ENCODE measurements at regions of chr16 and their contacts with region 1.

Region 1: GRCh38 chr16:15843635-15844279 is 13.1 kb downstream of the MYH11 start:
- DNase-seq: no peak
- ATAC-seq: no peak
- H3K4me3 ChIP-seq: no peak overlapping the region
- H3K27ac ChIP-seq: no peak overlapping the region
- H3K4me1 ChIP-seq: no peaks in the 10 kb centered on the region
- H3K27me3 ChIP-seq: no peaks in the 10 kb centered on the region
- CTCF ChIP-seq: no peak

Region 2: GRCh38 chr16:15928261-15929104 is 84.7 kb after region 1 on chr16:
- intact Hi-C with region 1: loop called in 1 of 2 experiments (anchors 10 kb)
- DNase-seq: no peak
- ATAC-seq: peak in 1 of 4 donors; percentile 21
- H3K4me3 ChIP-seq: no peak overlapping the region
- H3K27ac ChIP-seq: no peak overlapping the region
- H3K4me1 ChIP-seq: no peaks in the 10 kb centered on the region
- H3K27me3 ChIP-seq: no peaks in the 10 kb centered on the region
- CTCF ChIP-seq: no peak

Region 3: DNA sequence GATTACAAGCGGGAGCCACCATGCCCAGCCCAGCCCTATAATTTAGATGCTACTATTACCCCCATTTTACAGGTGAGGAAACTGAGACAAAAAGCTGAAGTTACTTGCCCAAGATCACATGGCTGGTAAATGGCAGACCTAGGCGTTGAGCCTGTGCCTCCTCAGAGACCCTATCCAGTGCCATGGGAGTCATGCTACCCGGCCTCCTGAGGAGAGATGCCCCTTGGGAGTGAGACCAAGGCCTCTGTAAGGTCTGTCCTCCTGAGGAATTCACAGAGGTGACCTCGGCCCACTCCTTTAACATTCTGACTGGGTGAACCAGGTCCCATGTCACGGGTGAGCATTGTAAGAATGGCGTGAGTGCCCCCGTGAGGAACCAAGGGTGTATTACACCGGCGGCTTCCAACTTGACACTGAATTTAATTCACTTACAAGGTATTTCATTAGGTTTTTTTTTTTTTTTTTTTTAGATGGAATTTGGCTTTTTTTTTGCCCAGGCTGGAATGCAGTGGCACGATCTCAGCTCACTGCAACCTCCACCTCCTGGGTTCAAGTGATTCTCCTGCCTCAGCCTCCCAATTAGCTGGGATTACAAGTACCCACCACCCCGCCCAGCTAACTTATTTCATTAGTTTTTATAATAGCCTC is 283.8 kb after region 1 on chr16:
- intact Hi-C with region 1: no loop called
- DNase-seq: peak; percentile 59 to 75
- ATAC-seq: peak; percentile 86 to 91 (median 88)
- H3K4me3 ChIP-seq: no peak overlapping the region
- H3K27ac ChIP-seq: no peak overlapping the region
- H3K4me1 ChIP-seq: no peaks in the 10 kb centered on the region
- H3K27me3 ChIP-seq: no peaks in the 10 kb centered on the region
- CTCF ChIP-seq: peak; percentile 87